ENCODE measurements at regions of chr17 and their contacts with region 1.

Region 1: GRCh38 chr17:33225509-33225908 is 67.6 kb downstream of the ASIC2 start:
- DNase-seq: no peak
- ATAC-seq: no peak
- H3K4me3 Mint-ChIP-seq: no peak overlapping the region
- H3K27ac Mint-ChIP-seq: no peak overlapping the region
- H3K4me1 Mint-ChIP-seq: no peaks in the 10 kb centered on the region
- H3K27me3 Mint-ChIP-seq: peaks cover 10% of the 10 kb centered on the region

Region 2: GRCh38 chr17:32723310-32723955 is 502.1 kb before region 1 on chr17:
- CTCF ChIA-PET with region 1: no interaction called
- POLR2A ChIA-PET with region 1: no interaction called
- intact Hi-C with region 1: no loop called
- DNase-seq: no peak
- ATAC-seq: no peak
- H3K4me3 Mint-ChIP-seq: no peak overlapping the region
- H3K27ac Mint-ChIP-seq: no peak overlapping the region
- H3K4me1 Mint-ChIP-seq: no peaks in the 10 kb centered on the region
- H3K27me3 Mint-ChIP-seq: no peaks in the 10 kb centered on the region

Region 3: GRCh38 chr17:33258291-33258690 is 32.8 kb after region 1 on chr17:
- CTCF ChIA-PET with region 1: no interaction called
- POLR2A ChIA-PET with region 1: interaction called, 10 read pairs
- intact Hi-C with region 1: no loop called
- DNase-seq: no peak
- ATAC-seq: no peak
- H3K4me3 Mint-ChIP-seq: no peak overlapping the region
- H3K27ac Mint-ChIP-seq: no peak overlapping the region
- H3K4me1 Mint-ChIP-seq: no peaks in the 10 kb centered on the region
- H3K27me3 Mint-ChIP-seq: peaks cover 10% of the 10 kb centered on the region

Region 4: GRCh38 chr17:33277436-33278100 is 52.1 kb after region 1 on chr17:
- CTCF ChIA-PET with region 1: no interaction called
- POLR2A ChIA-PET with region 1: no interaction called
- intact Hi-C with region 1: loop called in 1 of 2 experiments (anchors 10 kb)
- DNase-seq: no peak
- ATAC-seq: no peak
- H3K4me3 Mint-ChIP-seq: no peak overlapping the region
- H3K27ac Mint-ChIP-seq: no peak overlapping the region
- H3K4me1 Mint-ChIP-seq: no peaks in the 10 kb centered on the region
- H3K27me3 Mint-ChIP-seq: peaks cover 3% of the 10 kb centered on the region

Region 5: DNA sequence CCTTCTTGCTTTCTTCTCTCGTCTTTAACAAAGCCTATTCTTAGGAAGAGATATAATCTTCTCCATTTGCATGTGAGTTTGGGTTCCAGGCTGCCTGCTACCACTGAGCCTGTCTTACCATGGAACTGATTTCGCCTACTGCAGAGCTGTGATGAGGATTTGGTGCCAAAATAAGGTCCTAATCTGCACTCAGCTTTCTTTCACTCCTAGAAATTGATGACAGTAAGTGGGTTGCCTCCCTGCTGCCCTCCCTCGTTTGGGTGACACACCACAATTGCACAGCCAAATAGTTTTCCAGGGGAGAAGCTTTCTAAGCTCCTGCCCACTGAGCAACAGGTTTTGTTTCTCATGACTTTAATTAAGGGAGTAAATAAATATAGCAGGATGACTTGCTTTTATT is 92.7 kb after region 1 on chr17:
- CTCF ChIA-PET with region 1: no interaction called
- POLR2A ChIA-PET with region 1: no interaction called
- intact Hi-C with region 1: no loop called
- DNase-seq: no peak
- ATAC-seq: no peak
- H3K4me3 Mint-ChIP-seq: no peak overlapping the region
- H3K27ac Mint-ChIP-seq: no peak overlapping the region
- H3K4me1 Mint-ChIP-seq: peaks cover 6% of the 10 kb centered on the region
- H3K27me3 Mint-ChIP-seq: peaks cover 11% of the 10 kb centered on the region

Measured in activated CD4-positive, alpha-beta T cell treated with anti-CD3 and anti-CD28 coated beads for 36 hours (primary cell).